Naive thymus-derived CD4-positive, alpha-beta T cell (primary cell): ENCODE measurements at regions of chr13 and their contacts with region 1.

Region 1: DNA sequence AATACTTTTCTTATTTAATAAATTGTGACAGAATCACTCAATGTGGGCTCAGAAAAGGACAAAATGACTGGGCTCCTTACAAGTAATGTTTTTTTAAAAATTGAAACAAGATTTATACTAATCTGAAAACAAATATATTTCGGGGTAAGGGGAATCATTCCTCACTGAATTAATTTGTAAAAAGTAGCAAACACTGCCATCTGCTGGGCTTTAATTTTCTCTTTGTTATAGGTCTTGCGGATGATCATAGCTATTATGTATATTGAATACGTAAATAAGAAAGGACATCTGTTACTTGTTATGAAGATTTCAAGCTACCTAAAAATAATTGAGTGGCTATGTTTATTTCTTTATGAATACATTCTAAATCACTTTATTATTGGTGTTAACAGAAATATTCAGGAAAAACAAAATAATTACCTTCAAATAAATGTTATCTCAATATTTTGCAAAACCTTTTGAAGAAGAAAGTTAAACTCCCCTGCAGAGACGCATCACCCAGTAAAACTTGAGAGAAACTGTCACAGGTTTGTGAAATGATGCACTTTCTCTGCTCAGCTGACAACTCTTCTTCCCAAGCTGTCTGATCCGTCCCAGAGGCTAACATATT is 17.8 kb upstream of the ENOX1 start:
- DNase-seq: peak in 7 of 9 donors; percentile 7 to 50 (median 28)
- ATAC-seq: peak; percentile 57
- H3K4me3 ChIP-seq: no peak overlapping the region
- H3K4me3 Mint-ChIP-seq: no peak overlapping the region
- H3K27ac ChIP-seq: no peak overlapping the region
- H3K27ac Mint-ChIP-seq: no peak overlapping the region
- H3K4me1 ChIP-seq: no peaks in the 10 kb centered on the region
- H3K4me1 Mint-ChIP-seq: peaks cover 0 to 2% (median 0%) of the 10 kb centered on the region in 7 donors
- H3K27me3 ChIP-seq: no peaks in the 10 kb centered on the region
- H3K27me3 Mint-ChIP-seq: peaks cover 0 to 20% (median 9%) of the 10 kb centered on the region in 5 donors

Region 2: GRCh38 chr13:42594970-42595571 is 1209.5 kb before region 1 on chr13:
- CTCF ChIA-PET with region 1: interaction called, 5 read pairs
- POLR2A ChIA-PET with region 1: no interaction called
- intact Hi-C with region 1: loop called (anchors 1 kb)
- DNase-seq: peak in 6 of 9 donors; percentile 25 to 53 (median 40)
- ATAC-seq: peak; percentile 62
- H3K4me3 ChIP-seq: no peak overlapping the region
- H3K4me3 Mint-ChIP-seq: no peak overlapping the region
- H3K27ac ChIP-seq: no peak overlapping the region
- H3K27ac Mint-ChIP-seq: no peak overlapping the region
- H3K4me1 ChIP-seq: no peaks in the 10 kb centered on the region
- H3K4me1 Mint-ChIP-seq: peaks cover 0 to 5% (median 0%) of the 10 kb centered on the region in 7 donors
- H3K27me3 ChIP-seq: no peaks in the 10 kb centered on the region
- H3K27me3 Mint-ChIP-seq: peaks cover 0 to 11% (median 0%) of the 10 kb centered on the region in 5 donors

Region 3: DNA sequence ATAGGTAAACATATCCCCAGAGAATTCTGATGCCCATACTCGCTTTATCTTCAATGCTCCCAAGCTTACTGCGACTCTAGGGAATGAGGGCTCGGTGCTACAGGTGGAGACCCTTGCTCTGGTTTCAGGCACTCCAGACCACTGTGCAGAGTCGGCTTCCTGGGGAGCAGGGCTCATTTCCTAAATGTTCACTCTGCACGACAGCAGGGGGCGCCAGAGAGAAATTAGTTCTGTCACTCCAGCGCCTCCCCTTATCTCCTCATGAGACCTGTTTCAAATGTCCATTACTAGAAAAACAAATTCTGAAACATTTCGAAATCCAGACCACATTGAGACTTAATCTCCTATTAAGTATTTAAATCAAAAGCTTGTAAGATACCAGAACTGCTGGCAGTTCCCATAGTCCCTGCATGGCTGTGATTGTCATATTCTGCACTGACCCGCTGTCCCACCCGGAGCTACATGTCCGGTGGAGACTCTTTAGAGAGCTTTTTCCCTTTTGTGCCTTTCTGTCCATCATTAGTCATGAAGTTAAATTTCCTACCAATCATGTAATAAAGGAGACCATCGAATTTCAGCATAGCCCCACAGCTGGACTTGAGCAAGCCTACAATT is 834.9 kb before region 1 on chr13:
- CTCF ChIA-PET with region 1: interaction called, 9 read pairs
- POLR2A ChIA-PET with region 1: no interaction called
- intact Hi-C with region 1: loop called (anchors 1 kb)
- DNase-seq: peak; percentile 52 to 84 (median 74)
- ATAC-seq: peak; percentile 95
- H3K4me3 ChIP-seq: no peak overlapping the region
- H3K4me3 Mint-ChIP-seq: peak overlapping the region in 1 of 10 donors; percentile 32
- H3K27ac ChIP-seq: no peak overlapping the region
- H3K27ac Mint-ChIP-seq: peak overlapping the region in 3 of 9 donors; percentile 58 to 77 (median 63)
- H3K4me1 ChIP-seq: peaks cover 8 to 18% of the 10 kb centered on the region in 2 donors
- H3K4me1 Mint-ChIP-seq: peaks cover 13 to 38% (median 21%) of the 10 kb centered on the region in 7 donors
- H3K27me3 ChIP-seq: no peaks in the 10 kb centered on the region
- H3K27me3 Mint-ChIP-seq: no peaks in the 10 kb centered on the region

Region 4: GRCh38 chr13:43303033-43303729 is 501.4 kb before region 1 on chr13:
- CTCF ChIA-PET with region 1: interaction called, 3 read pairs
- POLR2A ChIA-PET with region 1: no interaction called
- intact Hi-C with region 1: loop called in 1 of 2 experiments (anchors 10 kb)
- DNase-seq: peak in 1 of 9 donors; percentile 3
- ATAC-seq: no peak
- H3K4me3 ChIP-seq: no peak overlapping the region
- H3K4me3 Mint-ChIP-seq: no peak overlapping the region
- H3K27ac ChIP-seq: no peak overlapping the region
- H3K27ac Mint-ChIP-seq: no peak overlapping the region
- H3K4me1 ChIP-seq: no peaks in the 10 kb centered on the region
- H3K4me1 Mint-ChIP-seq: peaks cover 0 to 3% (median 0%) of the 10 kb centered on the region in 7 donors
- H3K27me3 ChIP-seq: no peaks in the 10 kb centered on the region
- H3K27me3 Mint-ChIP-seq: peaks cover 14 to 43% (median 19%) of the 10 kb centered on the region in 5 donors

Region 5: DNA sequence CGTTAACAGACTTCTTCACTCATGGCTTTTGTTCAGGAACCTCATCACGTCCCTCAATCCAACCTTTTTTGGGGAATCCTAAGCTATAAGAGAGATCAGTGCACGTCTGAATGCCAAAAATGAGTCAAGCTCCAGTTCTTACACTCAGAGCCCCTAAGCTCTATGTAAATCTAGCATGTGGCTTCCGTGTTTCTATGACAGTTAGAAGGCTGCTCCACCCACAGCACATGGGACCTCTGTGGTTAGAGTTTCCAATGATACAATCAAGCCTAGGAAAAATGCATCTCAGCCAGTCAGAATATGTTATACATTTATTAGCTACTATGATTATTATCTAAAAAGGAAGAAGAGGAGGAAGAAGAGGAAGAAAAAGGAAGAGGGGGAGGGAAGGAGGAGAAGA is 153.7 kb before region 1 on chr13:
- CTCF ChIA-PET with region 1: no interaction called
- POLR2A ChIA-PET with region 1: no interaction called
- intact Hi-C with region 1: no loop called
- DNase-seq: no peak
- ATAC-seq: no peak
- H3K4me3 ChIP-seq: no peak overlapping the region
- H3K4me3 Mint-ChIP-seq: no peak overlapping the region
- H3K27ac ChIP-seq: no peak overlapping the region
- H3K27ac Mint-ChIP-seq: no peak overlapping the region
- H3K4me1 ChIP-seq: no peaks in the 10 kb centered on the region
- H3K4me1 Mint-ChIP-seq: no peaks in the 10 kb centered on the region
- H3K27me3 ChIP-seq: no peaks in the 10 kb centered on the region
- H3K27me3 Mint-ChIP-seq: peaks cover 7 to 20% (median 14%) of the 10 kb centered on the region in 5 donors

Region 6: DNA sequence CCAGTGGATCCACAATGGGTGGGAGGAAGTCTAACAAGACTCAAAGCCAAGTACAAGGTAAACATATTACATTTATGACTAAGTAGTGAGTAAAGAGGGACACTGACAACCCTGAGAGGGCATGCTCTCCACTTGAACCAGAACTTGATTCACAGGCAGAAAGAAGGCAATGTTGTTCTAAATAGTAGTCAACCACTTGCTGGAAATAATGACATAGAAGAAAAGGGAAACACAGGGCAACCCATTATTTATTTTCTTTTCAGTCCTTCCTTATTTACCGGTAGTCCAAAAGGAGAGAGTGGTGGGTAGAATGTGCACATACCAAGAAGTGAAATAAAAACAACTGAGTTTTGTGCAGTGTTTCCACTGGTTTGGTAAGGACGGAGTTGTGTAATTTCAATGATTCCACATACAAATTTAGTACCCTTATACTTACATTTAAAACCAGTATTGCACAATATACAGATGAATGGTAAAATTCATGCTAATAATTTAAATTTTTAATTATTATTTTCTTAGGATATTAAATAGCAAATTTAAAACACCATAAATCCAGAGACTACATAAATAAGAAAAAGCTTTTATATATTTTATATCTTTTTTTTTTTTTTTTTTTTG is 83.7 kb before region 1 on chr13:
- CTCF ChIA-PET with region 1: no interaction called
- POLR2A ChIA-PET with region 1: no interaction called
- intact Hi-C with region 1: no loop called
- DNase-seq: no peak
- ATAC-seq: no peak
- H3K4me3 ChIP-seq: no peak overlapping the region
- H3K4me3 Mint-ChIP-seq: no peak overlapping the region
- H3K27ac ChIP-seq: no peak overlapping the region
- H3K27ac Mint-ChIP-seq: no peak overlapping the region
- H3K4me1 ChIP-seq: no peaks in the 10 kb centered on the region
- H3K4me1 Mint-ChIP-seq: no peaks in the 10 kb centered on the region
- H3K27me3 ChIP-seq: no peaks in the 10 kb centered on the region
- H3K27me3 Mint-ChIP-seq: peaks cover 3 to 27% (median 16%) of the 10 kb centered on the region in 5 donors

Region 7: DNA sequence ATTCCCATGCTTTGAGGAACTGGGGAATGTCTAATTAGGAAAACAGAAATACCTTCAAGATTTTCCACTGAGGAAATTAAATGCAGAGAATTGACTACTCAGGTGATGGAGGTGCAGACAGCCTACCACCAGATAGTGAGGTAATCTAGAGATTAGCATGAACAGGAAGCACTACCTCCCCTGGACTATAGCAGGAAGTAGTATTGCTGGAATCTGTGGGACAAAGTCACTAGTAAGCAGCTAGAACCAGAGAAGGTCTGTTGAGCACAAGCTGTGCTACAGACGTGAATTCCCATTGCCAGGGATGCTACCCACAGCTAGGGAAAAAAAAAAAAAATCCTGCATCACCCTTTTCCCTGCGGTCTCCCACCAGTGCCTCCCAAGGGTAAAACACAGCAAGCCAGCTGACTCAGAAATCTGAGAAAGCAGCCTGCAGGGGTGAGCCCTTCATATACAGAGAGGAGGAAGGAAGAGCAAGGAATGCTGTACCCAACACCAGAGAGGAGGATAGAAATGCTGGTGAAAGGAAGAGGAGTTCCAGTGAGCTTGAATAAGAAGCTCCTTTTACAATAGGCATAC is 28.0 kb before region 1 on chr13:
- CTCF ChIA-PET with region 1: no interaction called
- POLR2A ChIA-PET with region 1: no interaction called
- intact Hi-C with region 1: no loop called
- DNase-seq: no peak
- ATAC-seq: no peak
- H3K4me3 ChIP-seq: no peak overlapping the region
- H3K4me3 Mint-ChIP-seq: no peak overlapping the region
- H3K27ac ChIP-seq: no peak overlapping the region
- H3K27ac Mint-ChIP-seq: no peak overlapping the region
- H3K4me1 ChIP-seq: no peaks in the 10 kb centered on the region
- H3K4me1 Mint-ChIP-seq: no peaks in the 10 kb centered on the region
- H3K27me3 ChIP-seq: no peaks in the 10 kb centered on the region
- H3K27me3 Mint-ChIP-seq: peaks cover 18 to 45% (median 25%) of the 10 kb centered on the region in 5 donors

Region 8: DNA sequence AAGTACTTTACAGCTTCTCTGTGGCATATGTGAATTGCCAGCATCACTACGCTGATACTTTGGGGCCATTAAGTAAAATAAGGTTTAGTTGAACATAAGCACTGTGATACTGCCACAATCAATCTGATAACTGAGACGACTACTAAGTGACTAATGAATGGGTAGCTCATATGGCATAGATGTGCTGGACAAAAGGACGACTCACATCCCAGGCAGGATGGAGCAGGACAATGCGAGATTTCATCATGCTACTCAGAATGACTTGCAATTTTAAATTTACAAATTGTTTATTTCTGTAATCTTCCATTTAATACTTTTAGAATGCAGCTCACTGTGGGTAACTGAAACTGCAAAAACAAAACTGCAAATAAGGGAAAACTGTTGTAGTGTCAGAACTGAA is 61.3 kb after region 1 on chr13:
- CTCF ChIA-PET with region 1: no interaction called
- POLR2A ChIA-PET with region 1: no interaction called
- intact Hi-C with region 1: loop called in 1 of 2 experiments (anchors 10 kb)
- DNase-seq: no peak
- ATAC-seq: no peak
- H3K4me3 ChIP-seq: no peak overlapping the region
- H3K4me3 Mint-ChIP-seq: no peak overlapping the region
- H3K27ac ChIP-seq: no peak overlapping the region
- H3K27ac Mint-ChIP-seq: no peak overlapping the region
- H3K4me1 ChIP-seq: no peaks in the 10 kb centered on the region
- H3K4me1 Mint-ChIP-seq: no peaks in the 10 kb centered on the region
- H3K27me3 ChIP-seq: no peaks in the 10 kb centered on the region
- H3K27me3 Mint-ChIP-seq: peaks cover 0 to 2% (median 0%) of the 10 kb centered on the region in 5 donors

Region 9: GRCh38 chr13:44396701-44397580 is 592.4 kb after region 1 on chr13:
- CTCF ChIA-PET with region 1: no interaction called
- POLR2A ChIA-PET with region 1: no interaction called
- intact Hi-C with region 1: no loop called
- DNase-seq: no peak
- ATAC-seq: no peak
- H3K4me3 ChIP-seq: no peak overlapping the region
- H3K4me3 Mint-ChIP-seq: no peak overlapping the region
- H3K27ac ChIP-seq: no peak overlapping the region
- H3K27ac Mint-ChIP-seq: no peak overlapping the region
- H3K4me1 ChIP-seq: no peaks in the 10 kb centered on the region
- H3K4me1 Mint-ChIP-seq: peaks cover 0 to 2% (median 0%) of the 10 kb centered on the region in 7 donors
- H3K27me3 ChIP-seq: no peaks in the 10 kb centered on the region
- H3K27me3 Mint-ChIP-seq: peaks cover 0 to 7% (median 4%) of the 10 kb centered on the region in 5 donors